Activated CD4-positive, alpha-beta T cell treated with anti-CD3 and anti-CD28 coated beads, Interleukin-2, amount 10 ng/mL, durations not matched to agents 7 days and 5 days (primary cell): ENCODE measurements at regions of chr6 and their contacts with region 1.

Region 1: DNA sequence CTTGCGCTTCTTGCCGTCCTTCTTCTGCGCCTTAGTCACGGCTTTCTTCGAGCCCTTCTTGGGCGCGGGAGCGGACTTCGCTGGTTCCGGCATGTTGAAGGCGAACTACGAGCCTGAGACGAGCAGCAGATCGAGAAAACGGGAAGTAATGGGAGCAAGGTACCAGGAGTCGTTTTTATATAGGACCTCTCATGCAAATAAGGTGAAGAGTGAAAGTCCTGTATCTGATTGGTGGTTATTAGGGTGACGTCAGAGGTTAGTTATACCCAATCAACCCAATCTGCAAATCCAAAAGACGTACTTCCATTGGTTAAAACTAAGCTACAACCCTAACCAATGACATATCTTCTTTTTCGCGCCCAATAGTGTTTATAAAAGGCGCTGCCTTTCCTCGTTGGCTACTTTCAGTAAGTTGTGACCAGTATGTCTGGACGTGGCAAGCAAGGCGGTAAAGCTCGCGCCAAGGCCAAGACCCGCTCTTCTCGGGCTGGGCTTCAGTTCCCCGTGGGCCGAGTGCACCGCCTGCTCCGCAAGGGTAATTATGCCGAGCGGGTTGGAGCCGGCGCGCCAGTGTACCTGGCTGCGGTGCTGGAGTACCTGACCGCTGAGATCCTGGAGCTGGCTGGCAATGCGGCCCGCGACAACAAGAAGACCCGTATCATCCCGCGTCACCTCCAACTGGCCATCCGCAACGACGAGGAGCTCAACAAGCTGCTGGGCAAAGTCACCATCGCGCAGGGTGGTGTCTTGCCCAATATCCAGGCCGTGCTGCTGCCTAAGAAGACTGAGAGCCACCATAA is 100.6 kb upstream of the PRSS16 start:
- DNase-seq: peak; percentile 88
- H3K4me3 Mint-ChIP-seq: no peak overlapping the region
- H3K27ac Mint-ChIP-seq: no peak overlapping the region
- H3K4me1 Mint-ChIP-seq: peaks cover 24% of the 10 kb centered on the region
- H3K27me3 Mint-ChIP-seq: no peaks in the 10 kb centered on the region

Region 2: DNA sequence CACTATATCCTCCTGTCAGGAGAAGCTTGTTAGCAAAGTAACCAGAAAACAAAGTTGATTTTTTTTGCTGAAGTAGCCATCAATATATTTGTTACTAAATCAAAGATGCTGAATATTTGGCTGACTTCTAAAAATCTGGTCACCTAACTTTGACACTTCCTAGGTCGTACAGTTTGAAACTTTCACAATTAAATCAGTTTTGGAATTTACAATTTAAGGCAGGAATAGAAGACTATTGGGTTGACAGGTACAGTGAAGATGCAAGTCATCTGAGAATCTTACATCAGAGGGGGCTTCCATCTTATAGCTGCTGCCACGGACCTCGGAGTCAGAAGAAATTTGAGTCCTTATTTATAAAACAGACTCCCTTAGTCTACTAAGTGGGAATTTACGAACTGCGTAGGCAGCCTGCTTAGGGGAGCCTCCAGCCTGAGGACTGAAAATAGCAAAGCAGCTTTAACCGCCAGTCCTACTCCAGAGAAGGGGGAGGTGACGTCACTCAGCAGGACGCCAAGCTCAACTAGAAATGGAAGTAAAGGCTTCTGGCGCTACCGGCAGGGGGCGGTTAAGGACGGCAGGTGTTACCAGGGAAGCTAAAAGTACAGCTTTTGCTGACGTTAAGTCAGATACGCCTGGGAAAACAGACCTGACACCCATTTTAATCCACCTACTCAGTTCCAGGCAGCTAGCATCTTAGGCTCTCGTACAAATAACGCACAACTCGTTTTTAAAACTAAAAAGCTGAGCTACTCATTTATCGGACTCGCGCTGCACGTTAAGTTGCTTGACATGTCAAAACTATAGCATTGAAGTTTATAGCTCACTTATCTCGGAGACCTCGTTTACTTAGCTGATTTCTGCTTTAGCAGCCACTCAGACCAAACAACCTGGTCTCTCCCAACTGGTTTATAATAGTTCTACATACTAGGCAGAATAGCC is 1120.7 kb before region 1 on chr6:
- CTCF ChIA-PET with region 1: no interaction called
- POLR2A ChIA-PET with region 1: interaction called, 12 read pairs
- DNase-seq: peak; percentile 96
- H3K4me3 Mint-ChIP-seq: peak overlapping the region; percentile 88
- H3K27ac Mint-ChIP-seq: peak overlapping the region; percentile 100
- H3K4me1 Mint-ChIP-seq: peaks cover 86% of the 10 kb centered on the region
- H3K27me3 Mint-ChIP-seq: peaks cover 3% of the 10 kb centered on the region

Region 3: DNA sequence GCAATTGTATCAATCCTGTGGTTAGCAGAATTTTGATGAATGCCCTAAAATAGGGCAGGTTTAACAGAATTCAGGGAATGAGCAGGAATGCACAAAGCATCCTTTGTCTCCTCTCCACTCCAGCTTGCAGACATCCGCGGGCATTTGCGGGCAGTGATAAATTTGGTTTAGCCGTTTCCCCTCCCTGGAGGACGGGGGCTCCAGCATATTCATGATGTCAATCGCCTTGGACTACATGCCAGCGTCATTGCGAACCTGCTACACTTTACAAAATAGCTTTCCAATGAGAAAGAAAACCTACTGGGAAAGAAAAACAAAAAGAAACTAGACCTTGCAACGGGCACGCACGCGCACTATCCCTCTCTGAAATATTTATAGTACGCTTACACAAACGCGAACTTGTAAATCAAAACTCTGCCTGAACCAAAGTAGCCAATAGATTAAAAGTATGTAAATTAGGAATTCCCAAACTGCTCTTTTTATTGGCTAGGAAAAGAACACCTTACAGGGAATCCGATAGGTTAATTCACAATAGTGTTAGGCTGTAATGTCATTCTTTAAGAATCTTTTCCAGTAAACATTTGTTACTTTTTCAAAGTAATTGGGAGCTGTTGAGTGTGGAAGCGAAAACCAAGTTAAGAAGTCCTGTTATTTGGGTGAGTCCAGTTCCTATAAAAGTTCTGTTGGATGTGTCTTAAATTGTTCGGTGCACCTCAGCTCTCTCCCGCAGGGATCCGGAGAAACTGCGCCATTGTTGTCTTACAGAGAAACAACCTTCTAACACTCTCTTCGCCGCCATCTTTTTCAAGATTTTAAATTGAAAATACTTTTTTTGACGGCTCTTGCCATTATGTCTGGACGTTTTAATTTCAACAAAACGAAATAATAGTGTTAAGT is 923.0 kb before region 1 on chr6:
- CTCF ChIA-PET with region 1: no interaction called
- POLR2A ChIA-PET with region 1: interaction called, 12 read pairs
- DNase-seq: peak; percentile 82
- H3K4me3 Mint-ChIP-seq: no peak overlapping the region
- H3K27ac Mint-ChIP-seq: no peak overlapping the region
- H3K4me1 Mint-ChIP-seq: peaks cover 43% of the 10 kb centered on the region
- H3K27me3 Mint-ChIP-seq: no peaks in the 10 kb centered on the region

Region 4: DNA sequence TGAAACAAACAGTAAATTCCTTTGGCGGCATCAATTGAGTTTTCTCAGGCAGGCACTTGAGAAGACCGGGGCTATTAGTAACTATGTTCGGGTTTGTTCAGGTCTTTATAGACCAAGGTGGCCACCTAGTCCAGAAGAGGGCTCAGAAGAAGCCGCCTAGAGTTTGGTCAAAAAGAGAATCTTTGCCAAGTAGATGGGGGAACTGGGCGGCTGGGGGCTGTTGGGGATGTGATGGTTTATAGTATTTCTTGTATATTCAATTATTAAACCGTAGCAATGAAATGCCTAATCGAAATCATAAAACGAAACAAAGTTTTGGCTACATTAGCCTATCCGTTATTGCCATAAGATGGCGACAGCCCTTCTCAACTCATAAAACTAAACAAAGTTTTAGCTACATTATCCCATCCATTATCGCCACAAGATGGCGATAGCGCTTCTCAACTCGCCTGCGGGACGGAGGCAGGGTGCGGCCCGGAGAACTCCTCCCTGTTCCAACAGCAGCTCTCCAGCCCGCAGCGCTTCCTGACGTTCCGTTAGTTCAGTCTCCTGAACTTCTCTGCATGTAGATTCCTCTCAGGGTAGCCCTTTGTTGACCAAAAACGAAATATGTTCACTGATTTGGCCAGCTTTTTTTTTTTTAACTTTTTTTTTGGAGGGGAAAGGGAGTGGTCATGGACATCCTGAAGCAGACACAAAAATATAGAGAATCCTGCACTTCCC is 19.9 kb before region 1 on chr6:
- CTCF ChIA-PET with region 1: interaction called, 18 read pairs
- POLR2A ChIA-PET with region 1: interaction called, 232 read pairs
- DNase-seq: peak; percentile 91
- H3K4me3 Mint-ChIP-seq: peak overlapping the region; percentile 72
- H3K27ac Mint-ChIP-seq: peak overlapping the region; percentile 93
- H3K4me1 Mint-ChIP-seq: peaks cover 58% of the 10 kb centered on the region
- H3K27me3 Mint-ChIP-seq: no peaks in the 10 kb centered on the region

Region 5: DNA sequence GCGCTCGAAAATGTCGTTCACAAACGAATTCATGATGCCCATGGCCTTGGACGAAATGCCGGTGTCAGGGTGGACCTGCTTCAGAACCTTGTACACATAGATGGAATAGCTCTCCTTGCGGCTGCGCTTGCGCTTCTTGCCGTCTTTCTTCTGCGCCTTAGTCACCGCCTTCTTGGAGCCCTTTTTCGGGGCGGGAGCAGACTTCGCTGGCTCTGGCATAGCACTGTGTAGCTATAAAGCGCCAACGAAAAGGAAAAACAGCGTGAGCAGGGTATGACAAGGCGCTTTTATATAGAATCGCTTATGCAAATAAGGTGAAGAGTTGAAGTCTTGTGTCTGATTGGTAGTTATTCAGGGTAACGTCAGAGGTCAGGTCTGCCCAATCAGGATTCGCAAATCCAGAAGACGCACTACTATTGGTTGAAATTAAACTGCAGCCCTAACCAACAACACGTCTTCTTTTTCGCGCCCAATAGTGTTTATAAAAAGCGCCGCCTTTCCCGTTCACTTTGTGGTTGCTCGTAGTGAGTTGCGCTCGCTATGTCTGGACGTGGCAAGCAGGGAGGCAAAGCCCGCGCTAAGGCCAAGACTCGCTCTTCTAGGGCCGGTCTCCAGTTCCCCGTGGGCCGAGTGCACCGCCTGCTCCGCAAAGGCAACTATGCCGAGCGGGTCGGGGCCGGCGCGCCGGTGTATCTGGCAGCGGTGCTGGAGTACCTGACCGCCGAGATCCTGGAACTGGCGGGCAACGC is 14.2 kb before region 1 on chr6:
- CTCF ChIA-PET with region 1: interaction called, 18 read pairs
- POLR2A ChIA-PET with region 1: interaction called, 232 read pairs
- DNase-seq: peak; percentile 94
- H3K4me3 Mint-ChIP-seq: no peak overlapping the region
- H3K27ac Mint-ChIP-seq: no peak overlapping the region
- H3K4me1 Mint-ChIP-seq: peaks cover 66% of the 10 kb centered on the region
- H3K27me3 Mint-ChIP-seq: no peaks in the 10 kb centered on the region

Region 6: GRCh38 chr6:27156874-27157458 is 10.1 kb after region 1 on chr6:
- CTCF ChIA-PET with region 1: interaction called, 5 read pairs
- POLR2A ChIA-PET with region 1: interaction called, 13 read pairs
- DNase-seq: no peak
- H3K4me3 Mint-ChIP-seq: peak overlapping the region; percentile 68
- H3K27ac Mint-ChIP-seq: peak overlapping the region; percentile 90
- H3K4me1 Mint-ChIP-seq: peaks cover 56% of the 10 kb centered on the region
- H3K27me3 Mint-ChIP-seq: no peaks in the 10 kb centered on the region

Region 7: DNA sequence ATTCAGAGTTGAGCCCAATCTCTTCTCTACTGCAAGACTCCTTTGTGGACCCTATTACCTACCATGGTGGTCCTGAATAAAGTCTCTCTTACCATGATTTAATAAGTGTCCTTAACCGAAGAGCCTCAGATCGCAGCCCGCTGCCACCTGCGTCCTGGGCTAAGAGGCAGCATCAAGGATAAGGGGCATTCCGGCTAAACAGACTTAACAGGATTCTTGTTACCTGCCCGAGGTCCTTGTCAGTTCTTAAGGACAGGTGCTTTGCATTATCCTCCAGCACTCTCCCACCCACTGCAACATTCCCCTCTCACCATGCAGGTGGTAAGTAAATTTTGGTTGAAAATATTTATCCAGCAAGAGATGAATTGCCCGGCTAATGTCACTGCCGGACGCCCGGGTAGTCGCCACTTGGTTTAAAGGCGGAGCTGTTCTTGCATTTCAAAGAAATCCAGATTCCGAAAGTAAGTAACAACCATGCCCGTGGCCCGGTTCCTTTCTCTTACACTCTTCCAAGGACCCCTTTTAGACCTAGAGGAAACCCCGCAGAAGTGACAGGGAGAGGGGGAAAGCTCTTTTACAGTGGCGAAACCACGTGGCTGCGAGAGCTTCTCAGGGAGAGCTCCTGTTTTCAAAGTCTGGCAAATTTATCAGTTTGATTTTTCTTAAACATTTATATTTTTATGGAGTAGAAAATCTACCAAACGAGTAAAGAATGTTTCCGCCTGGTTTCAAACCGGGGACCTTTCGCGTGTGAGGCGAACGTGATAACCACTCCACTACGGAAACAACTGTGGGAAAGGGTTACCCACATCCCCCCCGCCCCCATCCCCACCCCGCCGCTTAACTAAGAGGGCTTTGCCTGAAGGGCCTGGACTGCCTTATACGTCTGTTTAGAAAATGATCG is 58.7 kb after region 1 on chr6:
- CTCF ChIA-PET with region 1: no interaction called
- POLR2A ChIA-PET with region 1: no interaction called
- DNase-seq: peak; percentile 56
- H3K4me3 Mint-ChIP-seq: peak overlapping the region; percentile 61
- H3K27ac Mint-ChIP-seq: no peak overlapping the region
- H3K4me1 Mint-ChIP-seq: peaks cover 31% of the 10 kb centered on the region
- H3K27me3 Mint-ChIP-seq: peaks cover 22% of the 10 kb centered on the region

Region 8: DNA sequence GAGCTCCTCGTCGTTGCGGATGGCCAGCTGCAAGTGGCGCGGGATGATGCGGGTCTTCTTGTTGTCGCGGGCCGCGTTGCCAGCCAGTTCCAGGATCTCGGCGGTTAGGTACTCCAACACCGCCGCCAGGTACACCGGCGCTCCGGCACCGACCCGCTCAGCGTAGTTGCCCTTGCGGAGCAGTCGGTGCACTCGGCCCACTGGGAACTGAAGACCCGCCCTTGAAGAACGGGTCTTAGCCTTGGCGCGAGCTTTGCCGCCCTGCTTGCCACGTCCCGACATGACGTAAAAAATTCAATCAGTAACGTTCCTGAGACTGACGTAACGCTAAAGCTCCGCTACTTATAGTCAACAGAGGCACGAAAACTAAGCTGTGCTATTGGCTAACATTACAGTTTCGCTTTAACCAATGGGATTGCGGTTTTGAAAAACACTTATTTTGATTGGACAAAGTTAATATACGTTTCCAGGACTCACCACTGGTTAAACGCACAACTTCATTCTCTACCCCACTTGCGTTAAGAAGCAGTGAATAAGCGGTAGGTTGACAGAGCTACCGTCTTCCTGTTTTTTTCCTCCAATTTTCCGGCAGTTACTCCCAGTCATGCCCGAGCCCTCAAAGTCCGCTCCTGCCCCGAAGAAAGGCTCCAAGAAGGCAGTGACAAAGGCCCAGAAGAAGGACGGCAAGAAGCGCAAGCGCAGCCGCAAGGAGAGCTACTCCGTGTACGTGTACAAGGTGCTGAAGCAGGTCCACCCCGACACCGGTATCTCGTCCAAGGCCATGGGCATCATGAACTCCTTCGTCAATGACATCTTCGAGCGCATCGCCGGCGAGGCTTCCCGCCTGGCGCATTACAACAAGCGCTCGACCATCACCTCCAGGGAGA is 691.4 kb after region 1 on chr6:
- CTCF ChIA-PET with region 1: no interaction called
- POLR2A ChIA-PET with region 1: interaction called, 13 read pairs
- DNase-seq: peak; percentile 92
- H3K4me3 Mint-ChIP-seq: no peak overlapping the region
- H3K27ac Mint-ChIP-seq: no peak overlapping the region
- H3K4me1 Mint-ChIP-seq: peaks cover 31% of the 10 kb centered on the region
- H3K27me3 Mint-ChIP-seq: no peaks in the 10 kb centered on the region